ENCODE measurements at regions of chr4 and their contacts with region 1.

Region 1: DNA sequence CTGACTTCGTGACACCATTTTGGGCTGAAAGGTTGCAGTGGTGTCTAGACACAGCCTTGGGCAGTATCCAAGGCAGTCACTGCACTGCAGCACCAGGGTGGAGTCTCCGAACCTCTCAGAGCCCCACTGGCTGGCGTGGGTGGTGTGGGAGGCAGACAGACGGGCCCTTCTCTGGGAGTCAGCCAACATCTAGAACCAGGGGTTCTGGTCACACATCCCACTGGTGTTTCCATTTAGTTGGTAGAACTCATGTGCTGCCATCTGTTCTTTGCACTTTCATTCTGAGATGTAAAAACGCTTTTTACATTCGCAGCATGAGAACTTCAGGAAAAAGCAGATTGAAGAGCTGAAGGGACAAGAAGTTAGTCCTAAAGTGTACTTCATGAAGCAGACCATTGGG is 3.6 kb downstream of the UCHL1 start:
- DNase-seq: no peak
- ATAC-seq: no peak

Region 2: DNA sequence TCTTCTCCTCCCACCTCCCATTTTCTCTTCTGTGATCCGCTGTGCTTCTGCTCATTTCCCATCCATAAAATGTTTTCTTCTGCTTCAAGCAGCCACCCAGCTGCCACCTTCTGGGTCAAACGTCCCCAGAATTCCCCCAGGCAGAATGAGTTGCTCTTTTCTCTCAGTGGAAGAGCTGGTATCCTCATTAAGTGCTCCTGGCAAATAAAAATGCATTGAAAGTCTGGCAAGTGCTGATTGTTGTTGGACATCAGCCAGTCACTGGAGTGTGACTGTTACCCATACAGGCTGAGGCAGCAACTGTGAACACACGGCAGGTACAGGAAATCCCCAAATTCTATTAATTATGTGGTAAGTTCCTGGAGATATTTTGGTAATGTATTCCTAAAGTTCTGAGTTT is 330.3 kb after region 1 on chr4:
- intact Hi-C with region 1: no loop called
- DNase-seq: peak; percentile 29
- ATAC-seq: peak; percentile 35 to 62

Region 3: GRCh38 chr4:41887821-41888686 is 627.7 kb after region 1 on chr4:
- intact Hi-C with region 1: loop called in 1 of 2 experiments (anchors 5 kb)
- DNase-seq: no peak
- ATAC-seq: no peak

Measured in left cardiac atrium (tissue), 4 donors.